ENCODE measurements at regions of chr22 and their contacts with region 1.

Region 1: DNA sequence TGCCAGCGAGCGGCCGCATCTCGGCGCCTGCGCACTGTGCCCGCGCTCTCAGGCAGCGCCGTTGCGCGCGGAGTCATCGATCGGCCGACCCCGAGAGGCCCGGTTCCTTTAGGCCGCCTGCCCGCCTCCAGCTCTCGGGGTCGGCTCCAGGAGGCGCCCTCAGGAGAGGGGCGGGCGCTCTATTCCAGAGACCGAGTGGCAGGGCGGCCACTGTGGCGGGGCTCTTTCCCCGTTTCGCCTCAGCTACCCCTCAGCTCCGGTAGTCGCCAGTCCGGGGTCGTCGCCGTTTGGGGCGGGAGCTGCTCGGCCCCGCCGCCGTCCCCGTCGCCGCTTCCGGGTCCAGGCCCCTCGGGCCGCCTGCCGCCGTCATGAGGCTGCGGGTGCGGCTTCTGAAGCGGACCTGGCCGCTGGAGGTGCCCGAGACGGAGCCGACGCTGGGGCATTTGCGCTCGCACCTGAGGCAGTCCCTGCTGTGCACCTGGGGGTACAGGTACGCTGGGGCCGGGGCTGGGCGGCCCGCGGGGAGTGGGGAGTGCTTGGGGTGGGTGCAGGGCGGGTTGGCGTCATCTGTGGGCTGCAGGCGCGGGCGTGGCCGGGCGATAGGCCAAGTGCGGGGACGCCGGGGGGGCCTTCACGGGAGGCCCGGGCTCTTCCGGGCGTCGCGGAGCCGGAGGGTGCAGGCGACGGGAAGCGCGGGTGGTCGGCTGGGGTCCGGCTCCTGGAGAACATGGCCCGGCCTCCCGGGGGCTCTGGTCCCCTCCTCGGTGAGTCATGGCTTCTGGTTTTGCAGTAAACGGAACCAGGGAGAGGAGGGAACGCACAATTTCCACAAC is at the start of gene FBXO7:
- DNase-seq: peak; percentile 69 to 95 (median 90)
- H3K4me3 ChIP-seq: peak within 1 kb of the TSS; percentile 65 to 99 (median 92)
- H3K27ac ChIP-seq: peak within 1 kb of the TSS; percentile 97 to 100 (median 99)
- H3K27me3 ChIP-seq: no peaks in the 10 kb centered on the region
- CTCF ChIP-seq: peak in 55 of 56 donors; percentile 10 to 78 (median 42)
- total RNA-seq, gene FBXO7: 54.1 to 217 (median 85.7) TPM

Region 2: GRCh38 chr22:31977141-31977841 is 497.6 kb before region 1 on chr22:
- intact Hi-C with region 1: loop called in 1 of 2 experiments (anchors 5 kb)
- DNase-seq: peak in 9 of 10 donors; percentile 28 to 80 (median 66)
- H3K4me3 ChIP-seq: no peak overlapping the region
- H3K27ac ChIP-seq: no peak overlapping the region
- H3K27me3 ChIP-seq: no peaks in the 10 kb centered on the region
- CTCF ChIP-seq: peak in 54 of 56 donors; percentile 42 to 75 (median 64)

Region 3: DNA sequence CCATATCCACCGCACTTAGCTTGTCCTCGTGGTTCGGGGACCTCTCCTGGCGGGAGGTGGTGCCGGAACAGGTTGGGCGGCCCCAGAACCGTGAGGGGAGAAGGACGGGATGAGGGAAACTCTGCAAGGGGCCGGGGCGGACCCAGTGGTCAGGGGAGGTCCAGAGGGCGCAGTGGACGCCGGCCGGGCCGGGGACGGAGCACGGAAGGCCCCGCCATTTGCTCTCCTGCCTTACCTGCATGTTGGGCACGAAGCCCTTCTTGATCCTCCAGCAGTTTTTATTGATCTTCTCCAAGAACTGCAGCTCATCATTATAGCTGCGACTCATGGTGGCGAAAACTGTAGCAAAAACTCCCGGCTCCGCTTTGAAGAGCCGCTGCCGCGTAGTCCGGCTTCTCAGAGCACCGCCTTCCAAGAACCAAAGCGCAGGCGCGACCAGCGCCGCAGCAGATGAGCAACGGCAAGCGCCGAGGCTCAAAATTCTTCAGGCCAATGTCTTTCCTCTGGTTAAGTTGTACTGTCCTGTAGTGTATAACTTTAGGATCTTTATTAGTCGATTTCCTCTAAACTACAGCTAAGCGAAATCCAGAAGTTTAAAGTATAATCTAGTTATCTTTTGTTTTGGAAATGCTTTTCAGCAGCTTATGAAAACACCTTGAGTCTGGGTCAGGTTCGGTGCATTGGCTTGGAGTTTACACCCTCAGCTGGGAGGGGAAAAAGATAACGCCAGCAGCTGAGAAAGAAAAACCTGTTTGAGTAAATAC is 62.8 kb before region 1 on chr22 and contains the start of gene RTCB:
- intact Hi-C with region 1: loop called (anchors 1 to 2 kb)
- DNase-seq: peak; percentile 81 to 94 (median 88)
- H3K4me3 ChIP-seq: peak within 1 kb of the TSS; percentile 63 to 100 (median 92)
- H3K27ac ChIP-seq: peak within 1 kb of the TSS in 51 of 59 donors; percentile 16 to 86 (median 56)
- H3K27me3 ChIP-seq: no peaks in the 10 kb centered on the region
- CTCF ChIP-seq: peak in 48 of 56 donors; percentile 8 to 66 (median 36)
- total RNA-seq, gene RTCB: 34.6 to 76.6 (median 58.4) TPM

Region 4: DNA sequence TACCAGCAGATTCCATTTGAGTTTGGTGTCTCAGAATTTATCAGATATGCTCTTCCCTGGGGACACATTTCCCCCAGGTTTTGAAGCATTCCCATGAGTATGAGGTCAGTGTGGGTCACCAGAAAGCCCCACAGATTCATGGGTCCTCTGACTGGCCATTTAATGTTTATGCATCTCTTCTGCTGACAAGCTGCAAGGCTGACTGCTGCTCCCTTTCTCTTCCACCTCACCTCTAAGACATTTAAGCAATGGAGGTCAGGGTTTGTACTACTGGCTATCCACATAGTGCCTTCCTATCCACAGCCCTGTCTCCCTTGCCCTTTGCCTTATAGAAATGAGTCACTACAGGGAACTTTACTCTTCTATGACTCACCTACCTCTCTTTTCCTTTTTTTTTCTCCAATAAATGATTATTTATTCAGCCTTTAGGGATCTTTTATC is 220.6 kb after region 1 on chr22:
- intact Hi-C with region 1: no loop called
- DNase-seq: no peak
- H3K4me3 ChIP-seq: no peak overlapping the region
- H3K27ac ChIP-seq: no peak overlapping the region
- H3K27me3 ChIP-seq: no peaks in the 10 kb centered on the region
- CTCF ChIP-seq: no peak

Region 5: GRCh38 chr22:32796865-32797573 is 322.2 kb after region 1 on chr22:
- intact Hi-C with region 1: loop called in 1 of 2 experiments (anchors 5 kb)
- DNase-seq: peak; percentile 19 to 83 (median 77)
- H3K4me3 ChIP-seq: peak overlapping the region in 8 of 59 donors; percentile 2 to 46 (median 21)
- H3K27ac ChIP-seq: peak overlapping the region in 30 of 59 donors; percentile 9 to 90 (median 60)
- H3K27me3 ChIP-seq: peaks cover 0 to 4% (median 0%) of the 10 kb centered on the region in 45 donors
- CTCF ChIP-seq: peak; percentile 52 to 96 (median 87)

Measured in dorsolateral prefrontal cortex (tissue), 120 donors.